Heart left ventricle (tissue), 16 donors: ENCODE measurements at regions of chr18 and their contacts with region 1.

Region 1: DNA sequence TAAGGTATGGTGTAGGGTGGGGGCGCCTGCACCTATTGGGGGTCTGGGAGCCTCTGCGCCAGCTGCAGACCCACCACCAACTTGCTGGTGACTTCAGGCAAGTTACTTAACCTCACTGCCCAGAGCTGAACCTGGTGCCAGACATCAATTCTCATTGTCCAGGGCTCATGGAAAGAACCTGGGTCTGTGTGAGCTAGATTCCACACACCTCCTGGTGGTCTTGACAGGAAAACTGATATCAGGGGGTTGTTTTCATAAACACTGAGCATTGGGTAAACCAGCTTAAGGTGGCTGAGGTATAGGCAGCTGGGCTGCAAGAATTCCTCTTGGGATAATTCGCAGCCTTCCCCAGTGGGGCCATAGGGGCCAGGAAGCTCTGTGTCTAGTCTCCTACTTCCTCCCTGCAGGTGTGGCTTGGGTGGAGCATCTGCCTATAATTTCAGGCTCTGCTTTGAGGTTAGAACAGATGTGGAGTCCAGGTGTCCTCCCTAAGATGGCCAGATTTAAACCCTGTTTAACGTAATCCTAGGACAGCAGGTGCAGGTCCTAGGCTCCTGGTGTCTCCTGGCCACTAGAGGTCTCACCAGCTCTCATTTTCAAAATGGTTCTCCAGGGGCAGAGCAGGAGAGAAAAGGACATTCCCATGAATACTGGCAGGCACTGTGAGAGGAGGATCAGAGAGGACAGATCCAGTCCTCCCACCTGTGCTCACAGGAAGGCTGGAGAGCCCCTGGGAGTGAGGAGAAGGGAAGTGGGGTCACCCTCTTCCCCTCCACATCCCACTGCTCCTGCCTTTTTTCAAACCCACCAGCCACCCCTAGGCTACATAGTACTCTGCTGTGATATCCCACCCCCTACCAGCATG is 100.4 kb upstream of the SMAD2 start:
- DNase-seq: peak in 2 of 5 donors; percentile 48 to 60
- ATAC-seq: peak; percentile 43 to 86 (median 76)
- H3K4me3 ChIP-seq: no peak overlapping the region
- H3K27ac ChIP-seq: no peak overlapping the region
- H3K4me1 ChIP-seq: peaks cover 0 to 26% (median 11%) of the 10 kb centered on the region in 12 donors
- H3K27me3 ChIP-seq: no peaks in the 10 kb centered on the region
- CTCF ChIP-seq: peak; percentile 51 to 81 (median 74)
- POLR2A ChIP-seq: no peak

Region 2: DNA sequence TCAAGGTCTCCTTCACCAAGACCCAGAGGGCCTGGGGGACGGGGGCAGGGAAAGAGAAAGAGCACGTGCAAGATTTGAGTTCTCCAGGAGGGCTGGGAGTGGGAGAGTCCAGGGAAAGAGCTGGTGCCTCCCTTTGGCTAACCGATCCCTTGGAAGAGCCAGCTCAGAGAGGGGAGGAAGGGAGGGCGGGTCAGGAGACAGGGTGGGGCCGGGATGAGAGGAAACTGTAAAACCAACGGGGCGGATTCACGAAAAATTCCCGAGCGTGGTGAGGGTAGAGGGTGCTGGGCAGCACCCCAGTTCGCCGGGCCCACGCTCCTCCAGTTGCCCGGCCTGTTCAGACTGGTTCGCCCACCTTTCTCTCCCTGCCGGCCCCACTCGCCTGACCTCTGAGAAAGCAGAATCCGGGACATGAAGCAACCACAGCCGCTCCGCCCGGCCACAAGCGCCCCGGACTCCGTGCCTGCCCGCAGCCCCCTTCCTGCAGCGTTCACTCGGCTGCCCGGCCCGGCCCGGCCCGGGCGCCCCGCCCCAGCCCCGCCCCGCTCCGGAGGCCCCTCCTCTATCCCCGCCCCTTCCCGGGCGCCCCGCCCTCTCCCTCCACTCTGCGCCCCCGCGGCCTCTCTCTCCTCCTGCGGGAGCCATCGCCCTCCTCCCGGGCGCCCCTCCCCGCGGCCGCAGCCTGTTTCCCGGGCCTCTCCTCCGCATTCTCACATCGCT is 130.5 kb after region 1 on chr18:
- intact Hi-C with region 1: loop called in 1 of 10 experiments (anchors 10 kb)
- DNase-seq: peak; percentile 86 to 90 (median 89)
- ATAC-seq: peak; percentile 93 to 98 (median 96)
- H3K4me3 ChIP-seq: peak overlapping the region; percentile 41 to 96 (median 68)
- H3K27ac ChIP-seq: peak overlapping the region; percentile 80 to 96 (median 90)
- H3K4me1 ChIP-seq: peaks cover 1 to 43% (median 23%) of the 10 kb centered on the region in 12 donors
- H3K27me3 ChIP-seq: no peaks in the 10 kb centered on the region
- CTCF ChIP-seq: no peak
- POLR2A ChIP-seq: peak in 1 of 2 donors; percentile 52

Region 3: GRCh38 chr18:48222118-48222517 is 191.3 kb after region 1 on chr18:
- intact Hi-C with region 1: loop called in 2 of 10 experiments (anchors 10 kb)
- DNase-seq: peak in 4 of 5 donors; percentile 51 to 72 (median 66)
- ATAC-seq: peak; percentile 45 to 87 (median 69)
- H3K4me3 ChIP-seq: no peak overlapping the region
- H3K27ac ChIP-seq: no peak overlapping the region
- H3K4me1 ChIP-seq: peaks cover 0 to 22% (median 6%) of the 10 kb centered on the region in 12 donors
- H3K27me3 ChIP-seq: no peaks in the 10 kb centered on the region
- CTCF ChIP-seq: no peak
- POLR2A ChIP-seq: no peak

Region 4: DNA sequence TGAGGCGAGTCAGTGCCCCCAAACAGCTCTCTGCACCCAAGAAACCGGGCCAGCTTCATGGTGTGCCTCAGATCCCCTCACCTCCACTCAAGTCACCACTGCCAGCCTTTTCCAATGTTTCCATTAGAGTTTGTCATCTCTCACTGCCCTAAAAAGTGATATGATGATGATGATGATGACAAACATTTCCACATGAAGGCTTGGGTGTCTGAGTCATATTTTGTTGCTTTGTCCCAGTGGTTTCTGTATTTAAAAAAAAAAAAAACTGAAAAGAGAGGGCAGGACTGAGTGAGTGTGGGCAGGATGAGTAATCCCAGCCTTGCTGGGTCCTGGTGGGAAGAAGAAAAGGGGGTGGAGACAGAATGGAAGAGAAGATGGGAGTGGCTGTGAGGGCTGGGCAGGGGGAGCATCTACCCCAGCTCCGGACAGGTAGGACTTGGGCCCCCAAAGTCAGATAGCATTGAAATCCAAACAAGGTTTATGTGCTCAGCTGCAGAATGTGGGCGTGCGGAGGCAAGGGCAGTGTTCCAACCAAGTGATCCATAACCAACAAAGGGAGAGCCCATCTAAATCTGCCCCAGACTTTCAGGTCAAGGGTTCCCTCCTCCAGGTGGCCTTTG is 299.7 kb after region 1 on chr18:
- intact Hi-C with region 1: loop called in 1 of 10 experiments (anchors 10 kb)
- DNase-seq: no peak
- ATAC-seq: peak in 2 of 4 donors; percentile 45 to 47
- H3K4me3 ChIP-seq: no peak overlapping the region
- H3K27ac ChIP-seq: no peak overlapping the region
- H3K4me1 ChIP-seq: peaks cover 0 to 4% (median 0%) of the 10 kb centered on the region in 12 donors
- H3K27me3 ChIP-seq: no peaks in the 10 kb centered on the region
- CTCF ChIP-seq: no peak
- POLR2A ChIP-seq: no peak

Region 5: DNA sequence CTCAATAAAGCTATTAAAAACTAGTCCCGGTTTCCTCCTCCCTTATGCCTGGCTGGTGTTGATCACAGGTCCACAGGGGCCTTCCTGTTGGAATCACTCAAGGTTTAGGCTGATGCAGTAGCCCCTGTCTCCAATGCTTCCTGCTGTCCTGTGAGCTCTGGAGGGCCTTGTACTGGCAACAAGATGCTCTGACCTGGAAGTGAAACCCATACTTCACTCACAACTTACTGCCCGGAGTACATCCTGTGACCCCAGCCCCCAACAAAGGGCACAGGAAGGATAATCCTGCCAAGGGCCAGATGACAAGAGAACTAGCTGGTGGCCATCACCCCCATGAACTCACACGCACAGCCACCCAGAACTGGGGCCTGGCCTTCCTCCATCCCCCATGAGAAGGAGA is 328.0 kb after region 1 on chr18:
- intact Hi-C with region 1: no loop called
- DNase-seq: peak in 1 of 5 donors; percentile 4
- ATAC-seq: no peak
- H3K4me3 ChIP-seq: no peak overlapping the region
- H3K27ac ChIP-seq: no peak overlapping the region
- H3K4me1 ChIP-seq: peaks cover 0 to 16% (median 0%) of the 10 kb centered on the region in 12 donors
- H3K27me3 ChIP-seq: no peaks in the 10 kb centered on the region
- CTCF ChIP-seq: no peak
- POLR2A ChIP-seq: no peak

Region 6: DNA sequence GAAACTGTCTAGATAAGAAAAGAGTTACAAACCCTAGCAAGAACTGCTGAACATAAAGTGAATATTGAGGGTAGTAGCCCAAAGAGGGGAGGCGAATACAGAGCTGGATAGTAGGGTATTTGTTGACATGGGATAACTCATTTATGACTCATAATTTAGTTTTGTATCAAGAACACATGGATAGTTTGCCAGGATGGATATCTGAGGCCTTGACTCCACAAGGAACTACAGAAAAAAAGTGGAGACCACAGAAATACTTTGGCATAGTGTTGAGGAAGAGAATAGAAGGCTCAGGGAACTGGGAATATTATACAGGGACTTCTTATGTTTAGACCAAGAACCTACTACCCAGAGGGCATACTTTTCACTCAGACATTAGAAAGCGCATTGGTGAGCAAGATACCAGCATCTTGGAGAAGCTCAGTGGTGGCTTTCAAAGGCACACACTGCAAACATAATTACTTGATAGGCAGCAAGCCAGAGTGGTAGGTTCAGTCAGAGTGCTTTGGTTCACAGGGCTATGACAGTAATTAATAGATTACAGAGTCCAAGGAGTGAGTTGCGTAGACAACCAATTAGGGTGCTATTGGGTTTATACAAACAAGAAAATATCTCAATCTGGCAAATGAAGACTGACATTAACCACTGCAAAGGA is 430.2 kb after region 1 on chr18:
- intact Hi-C with region 1: loop called in 2 of 10 experiments (anchors 5 kb)
- DNase-seq: no peak
- ATAC-seq: no peak
- H3K4me3 ChIP-seq: no peak overlapping the region
- H3K27ac ChIP-seq: no peak overlapping the region
- H3K4me1 ChIP-seq: peaks cover 0 to 9% (median 0%) of the 10 kb centered on the region in 12 donors
- H3K27me3 ChIP-seq: no peaks in the 10 kb centered on the region
- CTCF ChIP-seq: no peak
- POLR2A ChIP-seq: no peak